ENCODE measurements at regions of chr14 and their contacts with region 1.

Region 1: DNA sequence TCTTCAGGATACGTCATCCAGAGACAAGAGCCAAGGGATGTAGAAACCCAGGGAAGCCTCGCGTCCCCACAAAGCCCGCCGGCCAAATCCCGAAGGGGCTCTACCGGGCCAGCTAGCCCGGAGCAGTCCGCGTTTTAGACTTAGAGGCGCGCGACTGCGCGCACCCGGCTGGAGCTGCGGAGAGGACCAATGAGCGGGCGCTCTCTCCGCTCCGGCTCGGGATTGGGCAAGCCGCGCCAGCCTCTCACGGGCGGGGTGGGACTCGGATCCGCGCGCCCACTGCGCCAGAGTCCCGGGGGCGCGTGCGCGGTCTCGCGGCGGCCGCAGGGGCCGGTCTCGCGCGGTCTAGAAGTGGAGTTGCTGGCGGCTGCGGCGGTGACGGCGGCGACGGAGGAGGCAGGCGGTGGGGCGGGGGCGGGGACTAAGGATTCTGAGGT is 239 bp upstream of the PALS1 start:
- DNase-seq: peak; percentile 95
- ATAC-seq: peak; percentile 93
- H3K4me3 ChIP-seq: peak overlapping the region; percentile 56 to 94 (median 77)
- H3K4me3 Mint-ChIP-seq: peak overlapping the region; percentile 80
- H3K27ac ChIP-seq: peak overlapping the region; percentile 65 to 77
- H3K27ac Mint-ChIP-seq: peak overlapping the region; percentile 89
- H3K4me1 ChIP-seq: peaks cover 9 to 10% of the 10 kb centered on the region in 2 donors
- H3K4me1 Mint-ChIP-seq: peaks cover 15% of the 10 kb centered on the region
- H3K27me3 ChIP-seq: no peaks in the 10 kb centered on the region
- H3K27me3 Mint-ChIP-seq: no peaks in the 10 kb centered on the region
- CTCF ChIP-seq: no peak

Region 2: DNA sequence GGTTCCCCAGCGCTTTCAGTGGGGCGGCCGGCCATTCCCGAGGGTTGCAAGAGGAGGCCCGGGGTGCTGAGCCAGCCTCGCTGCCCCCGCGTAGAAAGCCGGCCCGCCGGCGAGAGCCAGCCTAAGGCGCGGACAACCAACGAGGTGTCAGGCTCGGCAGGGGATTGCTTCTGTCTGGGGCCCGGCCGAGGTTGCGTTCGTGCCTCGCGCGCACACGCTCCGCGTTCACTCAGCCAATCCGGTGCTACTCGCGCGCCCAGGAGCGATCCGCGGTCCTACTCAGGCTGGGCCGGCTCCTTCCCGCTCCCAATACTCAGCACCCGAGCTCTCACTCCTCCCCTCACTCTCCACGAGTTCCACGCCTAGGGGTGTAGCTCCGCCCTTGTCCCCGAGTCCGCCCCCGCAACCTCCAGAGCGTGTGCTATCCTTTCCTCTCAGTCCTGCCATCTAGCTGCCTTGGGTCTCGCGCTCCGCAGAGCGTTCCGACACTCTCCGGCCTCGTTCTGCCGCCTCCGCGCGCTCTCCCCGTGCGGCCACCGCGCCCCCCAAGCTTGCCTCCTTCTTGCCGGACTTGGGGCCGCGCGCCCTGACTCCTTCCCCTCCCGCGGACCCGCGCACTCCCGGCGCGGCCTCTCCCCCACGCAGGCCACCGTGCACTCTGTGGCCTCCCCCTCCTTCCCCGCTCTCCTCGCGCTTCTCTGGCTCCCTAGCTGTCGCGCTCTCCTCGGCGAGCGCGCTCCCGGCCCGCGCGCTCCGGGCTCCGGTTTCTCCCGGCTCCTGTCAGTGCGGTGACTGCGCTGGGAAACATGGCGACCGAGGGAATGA is 733.1 kb before region 1 on chr14 and contains the start of gene GPHN:
- CTCF ChIA-PET with region 1: no interaction called
- POLR2A ChIA-PET with region 1: interaction called, 4 read pairs
- intact Hi-C with region 1: loop called (anchors 1 kb)
- DNase-seq: peak; percentile 90
- ATAC-seq: peak; percentile 90
- H3K4me3 ChIP-seq: peak within 1 kb of the TSS; percentile 74 to 90 (median 81)
- H3K4me3 Mint-ChIP-seq: peak within 1 kb of the TSS; percentile 99
- H3K27ac ChIP-seq: peak within 1 kb of the TSS; percentile 36 to 66
- H3K27ac Mint-ChIP-seq: peak within 1 kb of the TSS; percentile 91
- H3K4me1 ChIP-seq: peaks cover 7 to 18% of the 10 kb centered on the region in 2 donors
- H3K4me1 Mint-ChIP-seq: peaks cover 25% of the 10 kb centered on the region
- H3K27me3 ChIP-seq: peaks cover 0 to 8% (median 0%) of the 10 kb centered on the region in 4 experiments
- H3K27me3 Mint-ChIP-seq: peaks cover 6% of the 10 kb centered on the region
- CTCF ChIP-seq: peak; percentile 24
- total RNA-seq, gene GPHN: 15.5 and 18.0 TPM in 2 replicates

Measured in B cell (primary cell).